Transverse colon (tissue), 4 donors: ENCODE measurements at regions of chr1 and their contacts with region 1.

Region 1: DNA sequence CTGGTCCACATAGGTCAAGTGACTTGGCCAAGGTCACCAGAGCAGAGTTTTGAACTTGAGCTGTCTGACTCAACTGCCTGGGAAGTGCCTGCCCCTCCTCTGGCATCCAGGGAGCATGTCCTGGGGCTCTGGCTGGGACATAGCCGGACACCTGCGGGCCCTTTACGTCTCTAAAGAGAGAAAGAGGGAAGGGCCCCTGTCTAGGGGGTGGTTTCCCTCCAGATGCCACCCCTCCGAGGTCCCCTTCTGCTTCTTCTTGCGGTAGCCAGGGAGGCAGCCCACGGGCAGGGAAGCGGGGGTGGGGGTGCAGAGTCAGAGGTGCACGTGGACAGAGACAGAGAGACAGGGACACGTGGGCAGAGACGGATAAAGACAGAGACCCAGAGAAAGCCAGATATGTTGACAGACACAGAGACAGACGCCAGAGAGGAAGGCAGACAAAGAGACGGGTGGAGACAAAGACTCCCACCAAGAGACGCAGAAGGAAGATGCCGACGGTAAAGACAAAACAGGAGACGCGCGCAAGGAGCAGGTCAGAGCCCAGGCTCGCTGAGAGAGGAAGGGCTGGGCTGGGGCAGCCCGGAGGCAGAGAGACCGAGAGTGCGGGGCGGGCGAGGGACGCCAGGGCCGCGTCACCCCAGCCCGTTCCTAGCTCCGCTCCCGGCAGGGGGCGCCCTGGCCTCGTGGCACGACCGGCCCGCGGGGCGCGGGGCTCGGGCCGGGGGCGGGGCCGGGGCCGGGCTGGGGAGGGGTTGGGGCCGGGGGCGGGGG is 458 bp upstream of the ALPL start:
- DNase-seq: peak; percentile 62
- H3K4me3 ChIP-seq: peak overlapping the region in 1 of 4 donors; percentile 38
- H3K27ac ChIP-seq: no peak overlapping the region
- H3K4me1 ChIP-seq: peaks cover 0 to 18% (median 8%) of the 10 kb centered on the region in 4 donors
- H3K27me3 ChIP-seq: peaks cover 55% of the 10 kb centered on the region
- CTCF ChIP-seq: peak; percentile 28 to 51 (median 47)
- EP300 ChIP-seq: no peak
- POLR2A ChIP-seq: no peak

Region 2: GRCh38 chr1:21647431-21648351 is 138.9 kb after region 1 on chr1:
- in situ Hi-C with region 1: loop called in 3 of 4 experiments (anchors 25 kb)
- intact Hi-C with region 1: loop called (anchors 10 kb)
- DNase-seq: peak; percentile 28
- H3K4me3 ChIP-seq: no peak overlapping the region
- H3K27ac ChIP-seq: no peak overlapping the region
- H3K4me1 ChIP-seq: peaks cover 8 to 20% (median 11%) of the 10 kb centered on the region in 4 donors
- H3K27me3 ChIP-seq: peaks cover 41% of the 10 kb centered on the region
- CTCF ChIP-seq: no peak
- EP300 ChIP-seq: no peak
- POLR2A ChIP-seq: no peak

Region 3: DNA sequence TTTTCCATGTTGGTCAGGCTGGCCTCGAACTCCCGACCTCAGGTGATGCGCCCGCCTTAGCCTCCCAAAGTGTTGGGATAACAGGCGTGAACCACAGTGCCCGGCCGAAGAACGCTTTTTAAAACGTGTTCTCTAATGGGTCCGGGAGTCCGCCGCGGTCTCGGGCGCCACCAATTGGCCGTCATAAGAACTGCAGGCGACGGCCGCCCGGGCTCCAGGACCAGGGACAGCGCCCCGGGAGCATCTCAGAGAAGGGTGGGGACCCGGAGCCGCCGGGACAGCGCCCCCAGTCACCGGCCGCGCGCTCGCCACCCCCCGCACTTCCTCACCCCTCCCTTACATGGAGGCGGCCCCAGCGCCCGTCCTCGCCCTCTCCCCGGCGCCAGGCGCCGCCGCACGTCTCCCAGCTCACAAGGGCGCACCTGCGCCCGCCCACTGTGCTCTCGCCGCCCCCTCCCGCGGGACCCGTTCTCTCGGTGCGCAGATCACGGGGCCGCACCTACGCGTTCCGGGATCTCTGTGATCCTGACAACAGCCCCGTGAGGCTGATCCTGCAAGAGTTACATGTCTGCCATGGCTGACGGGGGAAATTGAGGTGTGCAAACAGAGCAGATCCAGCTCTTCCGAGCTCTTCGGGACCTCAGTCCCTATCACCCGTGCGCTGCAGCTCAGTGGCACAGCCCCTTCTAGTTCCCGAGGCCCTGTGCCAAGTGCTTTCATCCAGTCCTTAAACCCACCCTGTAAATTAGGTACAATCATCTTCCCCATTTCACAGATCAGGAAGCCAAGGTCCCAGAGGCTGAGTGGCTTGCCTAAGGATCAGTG is 150.5 kb after region 1 on chr1:
- in situ Hi-C with region 1: loop called in 3 of 4 experiments (anchors 25 kb)
- intact Hi-C with region 1: no loop called
- DNase-seq: peak; percentile 74
- H3K4me3 ChIP-seq: peak overlapping the region in 1 of 4 donors; percentile 24
- H3K27ac ChIP-seq: no peak overlapping the region
- H3K4me1 ChIP-seq: peaks cover 0 to 4% (median 3%) of the 10 kb centered on the region in 4 donors
- H3K27me3 ChIP-seq: peaks cover 52% of the 10 kb centered on the region
- CTCF ChIP-seq: peak; percentile 92 to 97 (median 95)
- EP300 ChIP-seq: no peak
- POLR2A ChIP-seq: no peak